MCF 10A (cell line): ENCODE measurements at regions of chr15 and their contacts with region 1.

Region 1: DNA sequence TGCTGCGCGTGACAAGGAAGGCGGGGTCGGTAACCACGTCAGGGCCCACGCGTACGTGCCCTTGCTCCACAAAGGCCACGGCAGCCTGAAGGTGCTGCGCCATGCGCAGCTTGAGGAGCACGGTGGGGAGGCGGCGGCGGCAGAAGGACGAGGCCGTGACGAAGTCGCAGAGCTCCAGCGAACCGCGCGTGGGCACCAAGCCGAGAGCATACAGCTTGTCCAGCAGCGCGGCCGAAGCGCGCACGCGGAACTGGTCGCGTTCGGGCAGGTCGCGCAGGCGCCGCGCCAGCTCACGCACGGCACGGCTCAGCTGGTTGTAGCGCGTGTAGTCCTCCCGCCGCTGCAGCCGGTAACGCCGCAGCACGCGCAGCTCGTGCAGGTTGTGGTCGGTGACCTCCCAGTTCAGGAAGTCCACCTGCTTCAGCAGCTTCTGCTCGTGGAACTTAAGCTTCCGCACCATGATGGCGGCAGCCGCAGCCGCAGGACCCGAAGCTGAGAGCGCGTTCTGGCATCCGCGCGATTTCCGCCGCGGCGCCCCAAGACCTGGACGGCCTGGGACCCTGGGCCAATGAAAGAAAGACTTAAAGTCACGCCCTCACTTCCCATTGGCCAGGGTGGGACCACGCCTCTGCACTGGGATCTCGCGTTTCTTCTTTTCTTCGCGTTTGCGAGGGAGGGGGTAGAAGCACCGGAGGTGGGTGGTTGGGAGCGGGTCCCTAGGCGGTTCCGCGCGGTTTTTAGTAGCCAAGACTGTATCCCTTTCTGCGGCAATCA is at the start of gene IMP3:
- DNase-seq: peak; percentile 98
- H3K4me3 Mint-ChIP-seq: peak within 1 kb of the TSS; percentile 87
- H3K27ac Mint-ChIP-seq: peak within 1 kb of the TSS; percentile 70
- H3K4me1 Mint-ChIP-seq: peaks cover 18% of the 10 kb centered on the region
- H3K27me3 Mint-ChIP-seq: no peaks in the 10 kb centered on the region
- CTCF ChIP-seq: no peak
- total RNA-seq, gene IMP3: 45.8 and 58.0 TPM in 2 replicates

Region 2: DNA sequence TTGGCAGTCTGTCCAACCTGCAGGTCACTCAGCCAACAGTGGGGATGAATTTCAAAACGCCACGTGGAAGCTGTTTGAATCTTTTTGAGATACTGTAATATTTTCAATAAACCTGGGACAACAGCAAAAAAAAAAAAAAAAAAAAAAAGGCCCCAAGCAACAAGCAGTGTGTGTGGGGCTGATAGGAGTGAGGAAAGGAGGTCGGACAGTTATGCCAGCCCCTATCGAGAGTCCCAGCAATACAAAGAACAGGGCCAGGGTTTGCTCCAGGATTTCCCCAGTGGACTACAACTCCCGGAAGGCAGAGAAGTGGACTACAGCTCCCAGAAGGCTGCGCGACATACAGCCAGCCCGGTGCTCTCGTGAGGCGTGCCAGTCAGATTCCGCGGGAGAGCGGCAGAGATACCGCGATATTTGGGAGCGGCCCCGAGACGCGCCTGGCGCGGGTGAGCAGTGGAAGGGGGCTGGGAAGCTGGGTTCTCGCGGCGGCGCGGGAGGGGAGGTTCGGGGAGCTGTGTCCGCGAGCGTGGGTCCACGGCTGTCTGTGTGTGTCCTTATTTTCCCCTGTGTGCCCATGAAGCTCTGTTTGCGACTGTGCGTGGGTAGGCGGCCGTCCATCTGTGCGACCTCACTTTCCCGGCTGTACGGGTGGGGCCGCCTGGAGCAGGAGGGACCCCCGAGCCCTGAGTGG is 616.6 kb before region 1 on chr15 and contains the start of gene PPCDC:
- CTCF ChIA-PET with region 1: no interaction called
- POLR2A ChIA-PET with region 1: no interaction called
- intact Hi-C with region 1: no loop called
- DNase-seq: peak; percentile 95
- H3K4me3 Mint-ChIP-seq: peak within 1 kb of the TSS; percentile 94
- H3K27ac Mint-ChIP-seq: peak within 1 kb of the TSS; percentile 95
- H3K4me1 Mint-ChIP-seq: no peaks in the 10 kb centered on the region
- H3K27me3 Mint-ChIP-seq: no peaks in the 10 kb centered on the region
- CTCF ChIP-seq: no peak
- total RNA-seq, gene PPCDC: 20.3 and 25.1 TPM in 2 replicates

Region 3: GRCh38 chr15:75508840-75509532 is 130.9 kb before region 1 on chr15:
- CTCF ChIA-PET with region 1: interaction called, 7 read pairs
- POLR2A ChIA-PET with region 1: interaction called, 12 read pairs
- intact Hi-C with region 1: loop called (anchors 1 kb)
- DNase-seq: peak; percentile 53
- H3K4me3 Mint-ChIP-seq: no peak overlapping the region
- H3K27ac Mint-ChIP-seq: no peak overlapping the region
- H3K4me1 Mint-ChIP-seq: no peaks in the 10 kb centered on the region
- H3K27me3 Mint-ChIP-seq: no peaks in the 10 kb centered on the region
- CTCF ChIP-seq: peak; percentile 51

Region 4: DNA sequence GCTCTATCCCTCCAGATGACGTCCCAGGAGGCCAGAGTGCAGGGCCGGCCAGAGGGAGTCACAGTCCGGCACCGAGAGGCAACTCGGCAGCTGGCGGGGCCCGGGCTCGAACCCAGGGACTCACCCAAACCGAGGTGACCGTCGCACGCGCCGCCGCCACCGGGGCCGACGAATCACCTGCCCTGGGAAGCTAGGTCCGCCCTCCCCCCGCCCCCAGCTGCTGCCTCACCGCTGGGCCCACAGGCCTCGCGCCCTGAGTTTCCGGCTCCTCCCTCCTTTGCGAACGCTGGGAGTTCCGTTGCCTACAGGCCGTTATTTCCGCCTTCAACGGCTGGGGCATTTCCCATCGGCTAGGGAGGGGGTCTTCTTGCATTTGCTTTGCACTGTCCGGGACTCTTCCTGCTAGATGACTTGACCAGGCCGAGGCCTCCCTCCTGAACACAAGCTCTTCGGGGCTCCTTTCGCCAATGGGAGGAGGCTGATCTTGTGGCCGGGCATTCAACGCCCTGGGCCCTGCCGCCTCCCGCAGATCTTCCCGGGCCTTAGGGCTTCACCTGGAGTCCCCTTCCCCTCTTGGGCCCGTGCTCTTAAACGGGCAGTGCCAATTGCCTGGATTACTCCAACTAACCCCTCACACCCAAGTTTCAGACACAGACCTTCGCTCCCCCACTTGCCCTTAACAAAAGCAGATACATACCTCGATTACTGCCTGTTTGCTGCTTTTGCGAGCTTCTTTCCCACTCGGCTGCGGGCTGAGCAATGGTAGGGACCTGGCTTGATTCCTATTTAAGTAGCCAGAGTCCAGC is 14.2 kb before region 1 on chr15 and contains the start of gene SNUPN:
- CTCF ChIA-PET with region 1: interaction called, 37 read pairs
- POLR2A ChIA-PET with region 1: interaction called, 158 read pairs
- intact Hi-C with region 1: loop called (anchors 2 kb)
- DNase-seq: peak; percentile 94
- H3K4me3 Mint-ChIP-seq: peak within 1 kb of the TSS; percentile 87
- H3K27ac Mint-ChIP-seq: peak within 1 kb of the TSS; percentile 95
- H3K4me1 Mint-ChIP-seq: peaks cover 15% of the 10 kb centered on the region
- H3K27me3 Mint-ChIP-seq: no peaks in the 10 kb centered on the region
- CTCF ChIP-seq: no peak
- total RNA-seq, gene SNUPN: 23.9 and 28.9 TPM in 2 replicates

Region 5: DNA sequence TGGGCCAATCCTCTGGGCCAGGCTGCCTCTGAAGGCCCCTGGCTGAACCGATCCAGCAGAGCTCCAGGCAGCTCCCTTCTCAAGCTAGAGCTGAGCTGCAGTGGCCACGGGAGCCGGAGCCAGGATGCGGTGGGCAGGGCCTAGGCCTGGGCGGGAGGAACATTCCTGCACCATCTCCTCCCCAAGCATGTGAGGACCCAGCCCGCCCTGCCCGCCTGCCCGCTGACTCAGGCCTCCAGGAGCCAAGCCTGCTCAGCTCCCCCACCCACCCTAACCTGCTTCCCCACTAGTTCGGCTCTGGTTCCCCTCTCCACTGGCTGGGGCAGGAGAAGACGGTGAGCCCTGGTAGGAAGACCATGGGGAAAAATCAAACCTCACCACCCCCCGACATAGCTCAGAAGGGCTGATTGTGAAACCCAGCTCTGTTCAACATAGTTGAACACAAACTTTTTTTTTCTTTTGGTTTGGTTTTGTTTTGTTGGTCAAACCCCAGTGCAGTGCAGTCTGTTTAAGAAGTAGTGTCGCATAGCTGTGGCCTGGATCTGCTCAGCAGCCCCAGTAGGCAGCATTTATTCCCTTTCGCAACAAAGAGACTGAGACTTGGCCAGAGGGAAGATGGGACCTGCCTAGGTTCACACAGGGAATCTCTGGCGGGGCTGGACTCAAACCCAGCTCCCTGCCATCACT is 21.3 kb after region 1 on chr15:
- CTCF ChIA-PET with region 1: interaction called, 9 read pairs
- POLR2A ChIA-PET with region 1: interaction called, 111 read pairs
- intact Hi-C with region 1: loop called (anchors 2 kb)
- DNase-seq: peak; percentile 89
- H3K4me3 Mint-ChIP-seq: peak overlapping the region; percentile 40
- H3K27ac Mint-ChIP-seq: peak overlapping the region; percentile 97
- H3K4me1 Mint-ChIP-seq: peaks cover 47% of the 10 kb centered on the region
- H3K27me3 Mint-ChIP-seq: no peaks in the 10 kb centered on the region
- CTCF ChIP-seq: no peak

Region 6: GRCh38 chr15:75684642-75685041 is 44.7 kb after region 1 on chr15:
- CTCF ChIA-PET with region 1: interaction called, 13 read pairs
- POLR2A ChIA-PET with region 1: interaction called, 8 read pairs
- intact Hi-C with region 1: loop called (anchors 1 kb)
- DNase-seq: no peak
- H3K4me3 Mint-ChIP-seq: no peak overlapping the region
- H3K27ac Mint-ChIP-seq: no peak overlapping the region
- H3K4me1 Mint-ChIP-seq: no peaks in the 10 kb centered on the region
- H3K27me3 Mint-ChIP-seq: no peaks in the 10 kb centered on the region
- CTCF ChIP-seq: no peak

Region 7: DNA sequence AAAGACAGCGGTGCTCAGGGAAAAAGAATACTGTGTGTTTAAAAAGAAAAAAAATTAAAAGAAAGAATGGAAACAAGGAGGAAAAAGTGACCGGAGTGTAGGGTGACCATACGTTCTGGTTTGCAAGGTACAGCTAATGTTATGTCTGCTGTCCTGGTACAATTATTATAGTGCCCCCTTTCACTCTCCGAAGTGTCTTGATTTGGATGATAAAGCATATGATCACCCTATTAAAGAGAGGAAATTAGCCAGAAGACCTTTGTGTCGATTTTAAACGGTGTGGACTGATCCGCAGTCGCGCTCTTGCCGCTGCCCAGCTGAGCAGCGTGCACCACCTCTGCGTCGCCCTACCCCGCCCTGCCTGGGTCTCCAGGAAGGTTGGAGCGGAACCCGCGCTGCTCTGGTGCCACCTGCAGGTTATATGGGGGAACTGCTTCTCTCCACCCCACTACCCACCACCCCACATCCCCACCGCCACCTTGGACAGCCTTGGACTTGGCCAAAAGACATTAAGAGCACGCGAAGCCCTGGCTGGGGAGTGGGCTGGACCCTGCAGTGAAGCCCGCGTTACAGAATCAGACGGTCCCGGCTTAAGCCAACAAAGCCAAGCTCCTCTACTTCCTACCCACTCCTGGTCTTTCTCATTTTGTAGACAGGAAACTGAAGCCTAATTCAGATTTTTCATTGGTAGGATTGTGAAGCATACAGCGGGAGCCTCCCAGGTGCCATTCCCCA is 162.1 kb after region 1 on chr15:
- CTCF ChIA-PET with region 1: interaction called, 6 read pairs
- POLR2A ChIA-PET with region 1: no interaction called
- intact Hi-C with region 1: loop called (anchors 5 kb)
- DNase-seq: peak; percentile 83
- H3K4me3 Mint-ChIP-seq: peak overlapping the region; percentile 38
- H3K27ac Mint-ChIP-seq: no peak overlapping the region
- H3K4me1 Mint-ChIP-seq: no peaks in the 10 kb centered on the region
- H3K27me3 Mint-ChIP-seq: peaks cover 26% of the 10 kb centered on the region
- CTCF ChIP-seq: peak; percentile 92